Vagina (tissue), 2 donors: ENCODE measurements at regions of chr12 and their contacts with region 1.

Region 1: DNA sequence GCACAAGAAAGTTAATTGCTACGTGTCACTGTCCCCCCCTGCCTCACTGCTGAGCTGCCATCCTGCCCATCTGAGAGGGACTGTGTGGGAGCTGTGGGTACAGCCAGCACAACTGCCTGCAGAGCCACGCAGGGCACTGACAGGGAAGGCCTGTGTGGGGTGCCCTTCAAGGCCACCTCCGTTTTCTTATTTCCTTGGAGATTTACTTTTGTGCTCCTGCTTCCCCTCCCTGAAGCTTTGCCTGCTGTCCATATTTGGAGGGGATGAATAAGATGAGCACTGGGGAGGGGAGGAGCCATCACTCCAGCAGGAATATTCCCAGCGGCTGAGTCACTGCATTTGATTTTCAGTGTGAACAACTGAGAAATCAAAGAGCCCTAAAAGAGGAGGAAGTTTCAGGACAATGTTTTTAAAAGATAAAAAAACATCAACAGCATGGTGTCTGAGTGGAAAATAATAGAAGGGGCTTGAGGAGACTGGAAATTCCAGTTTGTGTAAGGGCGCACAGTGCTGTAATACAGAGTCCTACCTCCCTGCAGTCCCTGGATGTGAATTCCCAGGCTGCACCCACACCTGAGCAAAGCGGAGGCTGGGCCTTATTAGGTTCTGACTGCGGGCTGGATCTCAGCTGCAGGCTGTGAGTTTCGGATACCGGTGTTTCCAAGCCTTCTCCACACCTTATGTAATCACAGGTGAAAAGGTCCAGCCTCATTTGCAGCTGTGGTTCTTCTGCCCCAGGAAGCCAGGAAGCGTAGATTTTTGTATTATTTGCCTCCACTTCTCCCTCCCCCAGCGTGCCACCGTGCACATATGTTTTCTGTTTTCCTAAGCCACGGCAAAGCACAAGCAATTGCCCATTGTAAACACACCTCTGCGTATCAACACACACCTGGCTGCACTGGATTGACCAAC is 192.6 kb upstream of the BCL2L14 start:
- DNase-seq: no peak
- H3K4me3 ChIP-seq: no peak overlapping the region
- H3K27ac ChIP-seq: peak overlapping the region; percentile 62
- H3K4me1 ChIP-seq: peaks cover 38% of the 10 kb centered on the region
- H3K27me3 ChIP-seq: no peaks in the 10 kb centered on the region
- CTCF ChIP-seq: no peak
- POLR2A ChIP-seq: no peak

Region 2: DNA sequence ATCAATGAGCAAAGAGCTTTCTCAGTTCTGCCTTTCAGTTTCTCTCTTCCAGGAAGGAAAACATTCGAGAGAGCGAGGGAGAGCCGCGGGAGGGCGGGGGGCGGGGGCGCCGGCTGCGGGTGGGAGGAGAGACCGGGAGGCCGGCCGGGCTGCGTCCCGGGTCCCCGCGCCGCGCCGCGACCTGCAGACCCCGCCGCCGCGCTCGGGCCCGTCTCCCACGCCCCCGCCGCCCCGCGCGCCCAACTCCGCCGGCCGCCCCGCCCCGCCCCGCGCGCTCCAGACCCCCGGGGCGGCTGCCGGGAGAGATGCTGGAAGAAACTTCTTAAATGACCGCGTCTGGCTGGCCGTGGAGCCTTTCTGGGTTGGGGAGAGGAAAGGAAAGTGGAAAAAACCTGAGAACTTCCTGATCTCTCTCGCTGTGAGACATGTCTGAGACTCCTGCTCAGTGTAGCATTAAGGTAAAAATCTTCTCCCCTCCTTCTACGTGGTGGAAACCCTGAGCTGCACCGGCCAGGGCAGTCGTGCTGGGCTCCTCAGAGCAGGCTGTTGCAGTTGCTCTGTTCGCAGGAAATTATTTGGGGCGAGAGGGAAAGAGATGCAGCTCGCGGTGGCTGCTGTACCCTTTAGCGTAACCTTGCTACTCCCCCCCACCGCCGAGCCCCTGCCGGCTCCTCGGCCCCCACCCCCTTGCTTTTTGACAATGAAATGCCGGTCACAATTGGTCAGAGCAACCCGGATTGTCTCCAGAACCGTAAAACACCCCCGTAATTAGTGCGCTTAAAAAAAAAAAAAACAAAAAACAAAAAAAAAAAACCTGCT is 228.2 kb before region 1 on chr12:
- intact Hi-C with region 1: loop called (anchors 10 kb)
- DNase-seq: no peak
- H3K4me3 ChIP-seq: peak overlapping the region; percentile 87 to 89
- H3K27ac ChIP-seq: peak overlapping the region; percentile 89
- H3K4me1 ChIP-seq: peaks cover 44% of the 10 kb centered on the region
- H3K27me3 ChIP-seq: no peaks in the 10 kb centered on the region
- CTCF ChIP-seq: no peak
- POLR2A ChIP-seq: no peak